Sigmoid colon (tissue), 7 donors: ENCODE measurements at regions of chrX and their contacts with region 1.

Region 1: GRCh38 chrX:49915361-49916222 is 6.8 kb upstream of the CLCN5 start:
- DNase-seq: no peak
- H3K4me3 ChIP-seq: no peak overlapping the region
- H3K27ac ChIP-seq: no peak overlapping the region
- H3K4me1 ChIP-seq: peaks cover 0 to 6% (median 0%) of the 10 kb centered on the region in 4 donors
- H3K27me3 ChIP-seq: no peaks in the 10 kb centered on the region
- CTCF ChIP-seq: peak; percentile 12 to 74 (median 44)
- EP300 ChIP-seq: no peak
- POLR2A ChIP-seq: no peak

Region 2: DNA sequence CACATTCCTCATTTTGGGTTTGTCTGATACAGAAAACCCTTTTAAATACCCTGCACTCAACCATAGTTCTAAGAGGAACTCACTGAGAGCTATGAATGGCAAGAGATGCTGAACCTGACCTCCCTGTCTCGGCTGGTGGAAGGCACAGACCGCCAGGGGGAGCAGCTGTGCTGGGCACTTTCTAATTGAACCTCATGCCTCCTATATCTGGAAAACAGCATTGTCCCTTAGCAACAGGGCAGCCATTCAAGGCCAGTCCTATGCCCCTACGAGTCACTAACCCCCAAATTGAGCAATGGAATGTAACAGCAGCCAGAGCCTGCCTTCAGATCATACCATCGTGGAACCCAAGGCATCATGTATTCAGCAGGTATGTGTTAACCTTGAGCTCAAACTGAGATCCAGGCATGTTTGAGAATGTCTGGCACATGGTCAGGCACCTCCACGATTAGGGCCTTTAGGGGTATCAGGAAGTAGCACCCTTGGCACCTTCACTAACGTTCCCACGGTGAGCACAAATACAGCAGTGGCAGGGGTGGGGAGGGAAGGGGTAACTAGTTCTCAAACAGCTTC is 31.2 kb before region 1 on chrX:
- intact Hi-C with region 1: no loop called
- DNase-seq: no peak
- H3K4me3 ChIP-seq: no peak overlapping the region
- H3K27ac ChIP-seq: no peak overlapping the region
- H3K4me1 ChIP-seq: peaks cover 0 to 12% (median 8%) of the 10 kb centered on the region in 4 donors
- H3K27me3 ChIP-seq: no peaks in the 10 kb centered on the region
- CTCF ChIP-seq: peak; percentile 14 to 55 (median 22)
- EP300 ChIP-seq: no peak
- POLR2A ChIP-seq: no peak

Region 3: DNA sequence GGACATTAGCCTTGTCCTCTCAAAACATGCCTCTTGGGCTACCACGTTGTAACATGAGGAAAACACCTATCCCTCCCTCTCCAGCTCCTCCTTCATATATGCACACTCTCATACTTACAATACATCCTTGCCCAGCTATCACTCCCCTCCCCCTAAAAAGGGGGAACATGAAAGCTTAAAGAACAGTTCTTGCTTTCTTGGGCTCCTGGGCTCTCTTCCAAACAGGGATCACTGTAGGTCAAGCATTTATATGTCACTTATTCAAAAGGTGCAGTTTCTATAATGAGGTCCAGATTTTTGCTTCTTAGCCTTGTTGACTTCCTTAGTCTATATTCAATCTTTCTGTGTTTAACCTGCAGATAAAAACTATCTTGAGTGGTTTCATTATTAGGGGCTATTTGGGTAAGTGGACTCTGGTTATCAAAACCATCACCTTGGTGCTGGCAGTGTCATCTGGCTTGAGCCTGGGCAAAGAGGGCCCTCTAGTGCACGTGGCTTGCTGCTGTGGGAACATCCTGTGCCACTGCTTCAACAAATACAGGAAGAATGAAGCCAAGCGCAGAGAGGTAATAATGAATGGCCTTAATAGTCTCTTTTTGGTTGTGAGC is 165.8 kb after region 1 on chrX:
- intact Hi-C with region 1: loop called (anchors 10 kb)
- DNase-seq: no peak
- H3K4me3 ChIP-seq: no peak overlapping the region
- H3K27ac ChIP-seq: no peak overlapping the region
- H3K4me1 ChIP-seq: no peaks in the 10 kb centered on the region
- H3K27me3 ChIP-seq: no peaks in the 10 kb centered on the region
- CTCF ChIP-seq: no peak
- EP300 ChIP-seq: no peak
- POLR2A ChIP-seq: no peak

Region 4: DNA sequence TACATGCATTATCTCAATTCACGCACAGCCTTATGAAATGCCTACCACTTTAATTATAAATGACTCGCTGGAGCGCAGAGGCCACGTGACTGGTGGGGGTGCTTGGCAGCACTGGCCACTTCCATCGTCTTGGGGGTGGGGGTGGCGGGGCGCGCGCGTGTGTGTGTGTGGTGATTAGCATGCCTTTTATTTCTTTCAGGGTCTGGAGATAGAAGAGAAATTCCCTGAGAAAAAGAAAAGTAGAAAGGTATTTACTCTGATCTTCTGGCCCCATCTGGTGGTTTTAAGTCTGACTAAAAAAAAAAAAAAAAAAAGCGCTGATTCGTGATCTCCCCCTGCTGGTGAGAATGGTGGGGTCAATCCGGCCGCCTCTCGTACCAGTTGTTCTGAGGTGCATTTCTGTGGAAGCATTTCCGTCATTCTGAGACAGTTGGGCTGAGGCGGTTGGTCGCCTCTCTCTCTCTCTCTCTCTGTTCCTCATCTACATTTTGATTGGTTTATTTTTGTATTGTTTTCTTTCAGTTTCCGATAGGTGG is 288.8 kb after region 1 on chrX and contains the start of gene CCNB3:
- intact Hi-C with region 1: loop called (anchors 5 kb)
- DNase-seq: peak; percentile 81
- H3K4me3 ChIP-seq: peak within 1 kb of the TSS in 3 of 4 donors; percentile 31 to 35 (median 32)
- H3K27ac ChIP-seq: peak within 1 kb of the TSS in 2 of 4 donors; percentile 26 to 44
- H3K4me1 ChIP-seq: peaks cover 0 to 5% (median 2%) of the 10 kb centered on the region in 4 donors
- H3K27me3 ChIP-seq: no peaks in the 10 kb centered on the region
- CTCF ChIP-seq: peak in 3 of 4 experiments; percentile 52 to 58 (median 56)
- EP300 ChIP-seq: no peak
- POLR2A ChIP-seq: no peak
- total RNA-seq, gene CCNB3: 0.14 to 0.36 (median 0.22) TPM

Region 5: DNA sequence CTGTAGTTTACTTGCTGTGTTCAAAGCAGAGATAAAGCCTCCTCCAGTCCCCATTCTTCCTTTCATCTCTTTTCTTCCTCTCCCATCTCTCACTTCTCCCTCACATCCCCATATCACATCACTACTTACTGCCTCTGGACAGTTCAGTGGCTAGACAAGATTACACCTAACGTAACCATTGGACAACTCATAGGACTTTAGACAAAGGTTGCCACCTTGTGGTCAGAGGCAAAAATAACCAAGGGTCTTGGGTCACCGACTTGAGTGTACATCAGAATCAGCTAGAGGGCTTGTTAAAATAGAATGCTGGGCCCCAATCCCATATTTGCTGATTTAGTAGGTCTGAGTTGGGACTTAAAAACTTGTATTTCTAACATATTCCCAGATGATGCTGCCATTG is 664.4 kb after region 1 on chrX:
- intact Hi-C with region 1: loop called (anchors 5 kb)
- DNase-seq: no peak
- H3K4me3 ChIP-seq: no peak overlapping the region
- H3K27ac ChIP-seq: no peak overlapping the region
- H3K4me1 ChIP-seq: no peaks in the 10 kb centered on the region
- H3K27me3 ChIP-seq: no peaks in the 10 kb centered on the region
- CTCF ChIP-seq: peak in 3 of 4 experiments; percentile 14 to 33 (median 24)
- EP300 ChIP-seq: no peak
- POLR2A ChIP-seq: no peak